ENCODE measurements at regions of chr16 and their contacts with region 1.

Region 1: GRCh38 chr16:20987049-20987448 is 86.5 kb downstream of the LYRM1 start:
- DNase-seq: no peak
- ATAC-seq: no peak
- H3K4me3 ChIP-seq: no peak overlapping the region
- H3K27ac ChIP-seq: no peak overlapping the region
- H3K4me1 ChIP-seq: no peaks in the 10 kb centered on the region
- H3K27me3 ChIP-seq: no peaks in the 10 kb centered on the region
- CTCF ChIP-seq: no peak
- POLR2A ChIP-seq: no peak

Region 2: GRCh38 chr16:20971401-20971800 is 15.6 kb before region 1 on chr16:
- in situ Hi-C with region 1: no loop called
- intact Hi-C with region 1: loop called (anchors 1 kb)
- DNase-seq: no peak
- ATAC-seq: no peak
- H3K4me3 ChIP-seq: no peak overlapping the region
- H3K27ac ChIP-seq: no peak overlapping the region
- H3K4me1 ChIP-seq: no peaks in the 10 kb centered on the region
- H3K27me3 ChIP-seq: no peaks in the 10 kb centered on the region
- CTCF ChIP-seq: no peak
- POLR2A ChIP-seq: no peak

Region 3: GRCh38 chr16:22374311-22375116 is 1387.5 kb after region 1 on chr16 and contains the start of gene CDR2:
- in situ Hi-C with region 1: no loop called
- intact Hi-C with region 1: no loop called
- DNase-seq: peak; percentile 97
- ATAC-seq: peak; percentile 97
- H3K4me3 ChIP-seq: peak within 1 kb of the TSS; percentile 71 to 87 (median 78)
- H3K27ac ChIP-seq: peak within 1 kb of the TSS; percentile 63 to 76 (median 70)
- H3K4me1 ChIP-seq: peaks cover 21 to 25% of the 10 kb centered on the region in 2 donors
- H3K27me3 ChIP-seq: no peaks in the 10 kb centered on the region
- CTCF ChIP-seq: no peak
- POLR2A ChIP-seq: peak; percentile 70 to 88
- total RNA-seq, gene CDR2: 4.1 to 7.6 (median 7.3) TPM

Measured in gastrocnemius medialis (tissue), 4 donors.